Endothelial cell of umbilical vein (primary cell): ENCODE measurements at regions of chr6 and their contacts with region 1.

Region 1: GRCh38 chr6:167485186-167485978 is 160.5 kb downstream of the TTLL2 start:
- DNase-seq: peak; percentile 55
- H3K4me3 ChIP-seq: no peak overlapping the region
- H3K27ac ChIP-seq: no peak overlapping the region
- H3K4me1 ChIP-seq: peaks cover 3% of the 10 kb centered on the region
- H3K27me3 ChIP-seq: peaks cover 0 to 2% of the 10 kb centered on the region in 2 experiments
- CTCF ChIP-seq: peak; percentile 45 to 52
- POLR2A ChIP-seq: no peak

Region 2: DNA sequence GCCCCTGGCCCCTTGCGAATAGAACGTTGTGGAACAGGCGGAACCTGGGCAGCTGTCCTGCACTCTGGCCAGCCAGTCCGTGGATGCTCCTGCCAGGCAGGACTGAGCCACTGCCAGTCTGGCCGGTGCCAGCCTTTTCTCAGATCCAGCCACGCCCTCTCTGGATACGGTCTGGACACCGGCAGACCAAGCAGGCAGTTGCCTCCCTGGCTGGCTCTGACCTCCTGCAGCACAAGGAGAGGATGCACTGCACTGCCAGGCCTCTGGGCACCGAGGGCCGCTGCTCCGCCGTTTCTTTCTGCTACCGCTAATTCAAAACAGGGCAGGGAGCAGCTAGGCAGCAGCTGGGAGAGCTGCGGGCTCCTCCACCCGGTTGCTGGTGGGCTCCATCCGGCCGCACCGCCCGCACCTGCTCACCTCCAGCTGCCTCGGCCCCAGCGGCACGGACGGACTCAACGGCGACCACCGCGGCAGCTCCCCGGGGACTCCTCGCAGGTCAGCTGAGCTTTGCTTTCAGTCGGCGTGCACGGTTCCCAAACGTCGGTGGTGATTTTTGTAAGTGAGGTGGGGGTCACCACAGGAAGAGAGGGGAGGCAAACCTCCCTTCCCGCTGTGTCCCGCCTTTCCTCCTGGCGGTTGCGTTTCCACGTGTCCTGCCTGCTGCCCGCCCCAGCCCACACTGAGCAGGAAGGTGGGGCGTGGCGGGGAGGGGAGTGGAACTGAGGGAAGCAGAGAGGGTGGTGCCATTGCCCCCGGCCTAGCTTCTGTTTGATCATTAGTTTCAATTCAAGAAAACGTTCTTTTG is 311.0 kb after region 1 on chr6:
- CTCF ChIA-PET with region 1: interaction called, 5 read pairs
- POLR2A ChIA-PET with region 1: no interaction called
- dilution Hi-C with region 1: no loop called
- intact Hi-C with region 1: loop called (anchors 10 kb)
- DNase-seq: no peak
- H3K4me3 ChIP-seq: peak overlapping the region in 2 of 3 experiments; percentile 4 to 18
- H3K27ac ChIP-seq: no peak overlapping the region
- H3K4me1 ChIP-seq: no peaks in the 10 kb centered on the region
- H3K27me3 ChIP-seq: peaks cover 23 to 34% of the 10 kb centered on the region in 2 experiments
- CTCF ChIP-seq: no peak
- POLR2A ChIP-seq: no peak

Region 3: DNA sequence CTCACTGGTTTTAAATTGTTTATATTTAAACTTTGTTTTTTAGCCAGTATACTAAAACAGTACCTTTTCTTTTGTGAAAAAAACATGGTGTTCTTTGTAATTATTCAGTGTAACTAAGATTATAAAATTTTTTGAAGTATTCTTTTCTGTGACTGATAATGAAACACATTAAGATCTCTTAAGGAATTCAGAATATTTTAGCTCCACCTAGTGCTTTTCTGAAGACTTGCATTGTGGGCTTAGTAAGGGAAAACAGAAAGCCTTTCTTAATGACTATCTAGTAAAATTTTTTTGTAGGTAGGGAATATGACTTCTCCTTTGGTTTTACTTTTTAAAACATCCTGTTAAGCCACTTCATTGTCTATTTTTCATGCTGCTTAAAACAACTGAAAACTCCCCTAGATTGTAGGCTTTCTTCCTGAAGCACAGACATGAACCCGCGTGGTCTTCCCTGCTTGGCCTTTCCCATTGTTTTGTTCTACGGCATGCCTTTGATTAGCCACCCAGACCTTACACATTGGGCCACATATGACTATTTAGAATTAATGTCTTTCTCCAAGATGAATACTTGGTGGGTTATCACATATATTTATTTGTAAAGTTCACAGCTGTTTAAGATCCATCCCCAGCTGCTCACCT is 413.4 kb after region 1 on chr6:
- CTCF ChIA-PET with region 1: interaction called, 99 read pairs
- POLR2A ChIA-PET with region 1: no interaction called
- dilution Hi-C with region 1: no loop called
- intact Hi-C with region 1: loop called (anchors 1 kb)
- DNase-seq: peak; percentile 41
- H3K4me3 ChIP-seq: no peak overlapping the region
- H3K27ac ChIP-seq: no peak overlapping the region
- H3K4me1 ChIP-seq: no peaks in the 10 kb centered on the region
- H3K27me3 ChIP-seq: no peaks in the 10 kb centered on the region
- CTCF ChIP-seq: peak; percentile 44 to 52
- POLR2A ChIP-seq: no peak

Region 4: DNA sequence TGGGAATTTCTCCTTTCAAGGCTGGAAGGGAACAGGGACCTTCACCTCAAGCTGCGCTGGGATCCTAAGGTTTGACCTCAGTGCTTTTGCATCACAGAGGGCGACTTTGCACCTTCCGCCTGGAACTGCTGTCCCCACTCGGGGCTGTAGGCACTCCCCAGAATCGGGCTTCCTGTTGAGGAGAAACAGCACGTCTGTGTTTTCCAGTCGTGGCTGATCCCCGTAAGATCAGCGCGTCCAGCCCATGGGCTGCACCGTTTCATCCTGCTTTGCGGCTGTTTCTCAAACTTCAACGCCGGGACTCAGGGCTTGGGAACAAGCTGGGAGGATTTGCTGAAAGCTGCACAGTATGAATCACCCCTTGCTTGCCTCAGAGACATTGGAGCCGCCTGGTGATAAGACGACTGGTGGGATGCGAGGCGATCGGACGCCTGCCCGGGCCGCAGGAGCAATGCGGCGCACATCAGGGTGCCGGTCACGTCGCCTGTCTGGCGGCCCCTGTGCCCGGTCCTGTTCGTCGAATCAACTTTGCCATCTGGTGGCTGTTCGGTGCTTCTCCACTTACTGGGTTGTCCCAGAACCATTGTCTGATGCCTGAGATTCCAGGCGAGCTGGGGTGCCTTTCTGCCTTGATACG is 647.3 kb after region 1 on chr6:
- CTCF ChIA-PET with region 1: interaction called, 5 read pairs
- POLR2A ChIA-PET with region 1: no interaction called
- dilution Hi-C with region 1: no loop called
- intact Hi-C with region 1: loop called (anchors 1 kb)
- DNase-seq: peak; percentile 25
- H3K4me3 ChIP-seq: no peak overlapping the region
- H3K27ac ChIP-seq: no peak overlapping the region
- H3K4me1 ChIP-seq: no peaks in the 10 kb centered on the region
- H3K27me3 ChIP-seq: no peaks in the 10 kb centered on the region
- CTCF ChIP-seq: peak; percentile 16 to 42
- POLR2A ChIP-seq: no peak